B cell (primary cell): ENCODE measurements at regions of chrX and their contacts with region 1.

Region 1: GRCh38 chrX:42714981-42715700 is 62.8 kb downstream of the PPP1R2C start:
- DNase-seq: peak; percentile 43
- ATAC-seq: peak; percentile 51
- H3K4me3 ChIP-seq: no peak overlapping the region
- H3K4me3 Mint-ChIP-seq: peak overlapping the region; percentile 34
- H3K27ac ChIP-seq: no peak overlapping the region
- H3K27ac Mint-ChIP-seq: no peak overlapping the region
- H3K4me1 ChIP-seq: peaks cover under 1 to 7% of the 10 kb centered on the region in 2 donors
- H3K4me1 Mint-ChIP-seq: peaks cover 12% of the 10 kb centered on the region
- H3K27me3 ChIP-seq: no peaks in the 10 kb centered on the region
- H3K27me3 Mint-ChIP-seq: no peaks in the 10 kb centered on the region
- CTCF ChIP-seq: peak; percentile 19

Region 2: GRCh38 chrX:41796577-41796976 is 918.6 kb before region 1 on chrX:
- CTCF ChIA-PET with region 1: no interaction called
- POLR2A ChIA-PET with region 1: no interaction called
- intact Hi-C with region 1: loop called (anchors 10 kb)
- DNase-seq: no peak
- ATAC-seq: no peak
- H3K4me3 ChIP-seq: no peak overlapping the region
- H3K4me3 Mint-ChIP-seq: no peak overlapping the region
- H3K27ac ChIP-seq: no peak overlapping the region
- H3K27ac Mint-ChIP-seq: peak overlapping the region; percentile 60
- H3K4me1 ChIP-seq: peaks cover 19 to 20% of the 10 kb centered on the region in 2 donors
- H3K4me1 Mint-ChIP-seq: peaks cover 30% of the 10 kb centered on the region
- H3K27me3 ChIP-seq: no peaks in the 10 kb centered on the region
- H3K27me3 Mint-ChIP-seq: no peaks in the 10 kb centered on the region
- CTCF ChIP-seq: no peak

Region 3: DNA sequence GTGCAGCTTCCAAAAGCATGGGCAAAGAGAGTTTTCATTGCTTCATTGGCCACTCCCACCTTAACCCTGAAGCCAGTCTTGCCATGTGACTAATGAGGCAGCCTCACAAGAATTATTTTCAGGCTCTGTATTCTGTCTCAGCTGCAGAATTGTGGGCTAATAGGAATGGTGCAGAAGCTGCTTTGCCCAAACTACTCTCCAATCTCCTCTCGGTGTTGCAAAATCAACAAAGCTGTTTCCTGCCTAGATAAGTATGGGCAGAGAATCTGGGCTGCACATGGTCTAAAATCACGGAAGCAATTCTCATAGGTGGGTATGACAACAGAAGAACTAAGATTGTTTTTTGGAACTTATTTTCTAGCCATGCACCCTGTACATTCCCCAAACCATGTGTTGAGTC is 31.5 kb after region 1 on chrX:
- CTCF ChIA-PET with region 1: no interaction called
- POLR2A ChIA-PET with region 1: no interaction called
- intact Hi-C with region 1: no loop called
- DNase-seq: no peak
- ATAC-seq: no peak
- H3K4me3 ChIP-seq: no peak overlapping the region
- H3K4me3 Mint-ChIP-seq: no peak overlapping the region
- H3K27ac ChIP-seq: no peak overlapping the region
- H3K27ac Mint-ChIP-seq: no peak overlapping the region
- H3K4me1 ChIP-seq: peaks cover 0 to under 1% of the 10 kb centered on the region in 2 donors
- H3K4me1 Mint-ChIP-seq: peaks cover 1% of the 10 kb centered on the region
- H3K27me3 ChIP-seq: no peaks in the 10 kb centered on the region
- H3K27me3 Mint-ChIP-seq: no peaks in the 10 kb centered on the region
- CTCF ChIP-seq: no peak

Region 4: GRCh38 chrX:42759881-42760280 is 44.7 kb after region 1 on chrX:
- CTCF ChIA-PET with region 1: no interaction called
- POLR2A ChIA-PET with region 1: no interaction called
- intact Hi-C with region 1: no loop called
- DNase-seq: no peak
- ATAC-seq: no peak
- H3K4me3 ChIP-seq: no peak overlapping the region
- H3K4me3 Mint-ChIP-seq: no peak overlapping the region
- H3K27ac ChIP-seq: no peak overlapping the region
- H3K27ac Mint-ChIP-seq: no peak overlapping the region
- H3K4me1 ChIP-seq: no peaks in the 10 kb centered on the region
- H3K4me1 Mint-ChIP-seq: peaks cover 5% of the 10 kb centered on the region
- H3K27me3 ChIP-seq: no peaks in the 10 kb centered on the region
- H3K27me3 Mint-ChIP-seq: no peaks in the 10 kb centered on the region
- CTCF ChIP-seq: no peak